ENCODE measurements at regions of chr9 and their contacts with region 1.

Region 1: GRCh38 chr9:70602321-70603019 is 188.0 kb upstream of the KLF9 start:
- DNase-seq: peak in 8 of 9 experiments; percentile 8 to 72 (median 37)
- ATAC-seq: peak; percentile 78
- H3K4me3 ChIP-seq: no peak overlapping the region
- H3K4me3 Mint-ChIP-seq: no peak overlapping the region
- H3K27ac ChIP-seq: no peak overlapping the region
- H3K27ac Mint-ChIP-seq: no peak overlapping the region
- H3K4me1 ChIP-seq: no peaks in the 10 kb centered on the region
- H3K4me1 Mint-ChIP-seq: peaks cover 3% of the 10 kb centered on the region
- H3K27me3 ChIP-seq: no peaks in the 10 kb centered on the region
- H3K27me3 Mint-ChIP-seq: no peaks in the 10 kb centered on the region
- CTCF ChIP-seq: peak; percentile 84

Region 2: GRCh38 chr9:69900406-69900805 is 702.1 kb before region 1 on chr9:
- CTCF ChIA-PET with region 1: no interaction called
- POLR2A ChIA-PET with region 1: no interaction called
- intact Hi-C with region 1: no loop called
- DNase-seq: no peak
- ATAC-seq: no peak
- H3K4me3 ChIP-seq: no peak overlapping the region
- H3K4me3 Mint-ChIP-seq: no peak overlapping the region
- H3K27ac ChIP-seq: no peak overlapping the region
- H3K27ac Mint-ChIP-seq: no peak overlapping the region
- H3K4me1 ChIP-seq: no peaks in the 10 kb centered on the region
- H3K4me1 Mint-ChIP-seq: no peaks in the 10 kb centered on the region
- H3K27me3 ChIP-seq: no peaks in the 10 kb centered on the region
- H3K27me3 Mint-ChIP-seq: peaks cover 3% of the 10 kb centered on the region
- CTCF ChIP-seq: no peak

Region 3: DNA sequence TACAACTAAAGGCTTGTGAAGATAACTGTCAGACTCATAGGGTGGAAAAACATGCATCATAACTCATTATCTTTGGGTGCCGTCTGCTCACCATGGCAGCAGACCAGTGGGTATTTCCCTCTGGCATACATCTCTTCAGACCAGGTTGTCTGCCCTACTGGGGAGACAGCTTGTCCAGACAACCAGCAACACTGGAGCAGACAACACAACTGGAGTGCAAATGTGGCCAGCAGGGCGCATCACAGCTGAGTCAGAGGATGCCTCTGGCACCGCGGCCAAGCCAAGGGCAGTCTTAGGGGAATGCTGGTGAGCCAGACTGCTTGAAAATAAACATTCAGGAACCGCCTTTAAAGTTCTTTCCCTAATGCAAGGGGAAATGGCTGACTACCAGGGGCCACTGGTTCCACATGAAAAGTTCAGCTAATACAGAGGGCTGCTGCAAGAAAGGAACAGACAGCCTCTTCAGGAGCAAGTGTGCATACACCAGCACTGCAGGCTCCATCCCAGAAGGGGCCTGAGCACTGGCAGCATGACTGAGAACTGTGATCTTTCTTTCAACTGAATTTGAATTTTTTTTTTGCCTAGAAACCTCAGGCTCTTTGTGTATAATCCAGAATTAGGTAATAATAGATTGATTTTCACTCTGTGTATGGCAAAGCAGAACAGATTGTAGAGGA is 481.5 kb before region 1 on chr9:
- CTCF ChIA-PET with region 1: no interaction called
- POLR2A ChIA-PET with region 1: no interaction called
- intact Hi-C with region 1: loop called in 1 of 2 experiments (anchors 10 kb)
- DNase-seq: no peak
- ATAC-seq: no peak
- H3K4me3 ChIP-seq: no peak overlapping the region
- H3K4me3 Mint-ChIP-seq: no peak overlapping the region
- H3K27ac ChIP-seq: no peak overlapping the region
- H3K27ac Mint-ChIP-seq: no peak overlapping the region
- H3K4me1 ChIP-seq: no peaks in the 10 kb centered on the region
- H3K4me1 Mint-ChIP-seq: no peaks in the 10 kb centered on the region
- H3K27me3 ChIP-seq: no peaks in the 10 kb centered on the region
- H3K27me3 Mint-ChIP-seq: peaks cover 9% of the 10 kb centered on the region
- CTCF ChIP-seq: no peak

Region 4: GRCh38 chr9:70263421-70263820 is 339.0 kb before region 1 on chr9:
- CTCF ChIA-PET with region 1: no interaction called
- POLR2A ChIA-PET with region 1: no interaction called
- intact Hi-C with region 1: no loop called
- DNase-seq: no peak
- ATAC-seq: no peak
- H3K4me3 ChIP-seq: no peak overlapping the region
- H3K4me3 Mint-ChIP-seq: no peak overlapping the region
- H3K27ac ChIP-seq: no peak overlapping the region
- H3K27ac Mint-ChIP-seq: no peak overlapping the region
- H3K4me1 ChIP-seq: peaks cover 42% of the 10 kb centered on the region
- H3K4me1 Mint-ChIP-seq: peaks cover 69% of the 10 kb centered on the region
- H3K27me3 ChIP-seq: no peaks in the 10 kb centered on the region
- H3K27me3 Mint-ChIP-seq: no peaks in the 10 kb centered on the region
- CTCF ChIP-seq: no peak

Region 5: DNA sequence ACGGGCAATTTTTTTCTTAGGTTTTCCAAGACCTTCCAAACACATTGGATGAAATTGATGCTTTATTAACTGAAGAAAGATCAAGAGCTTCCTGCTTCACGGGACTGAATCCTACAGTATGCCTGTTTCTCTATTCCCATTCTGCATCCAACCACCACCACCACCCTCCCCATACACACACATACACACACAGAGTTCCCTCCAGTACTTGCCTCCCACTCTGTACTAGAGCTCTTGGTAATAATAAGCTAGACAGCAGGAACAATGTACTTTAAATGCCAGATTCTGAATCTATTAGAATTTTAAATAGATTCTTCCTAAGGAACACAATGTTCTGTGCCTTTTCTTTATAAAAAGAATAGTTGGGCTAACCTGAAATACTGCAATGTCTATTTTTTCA is 255.4 kb before region 1 on chr9:
- CTCF ChIA-PET with region 1: interaction called, 49 read pairs
- POLR2A ChIA-PET with region 1: interaction called, 5 read pairs
- intact Hi-C with region 1: loop called (anchors 1 kb)
- DNase-seq: no peak
- ATAC-seq: no peak
- H3K4me3 ChIP-seq: no peak overlapping the region
- H3K4me3 Mint-ChIP-seq: no peak overlapping the region
- H3K27ac ChIP-seq: no peak overlapping the region
- H3K27ac Mint-ChIP-seq: peak overlapping the region; percentile 3
- H3K4me1 ChIP-seq: no peaks in the 10 kb centered on the region
- H3K4me1 Mint-ChIP-seq: no peaks in the 10 kb centered on the region
- H3K27me3 ChIP-seq: no peaks in the 10 kb centered on the region
- H3K27me3 Mint-ChIP-seq: no peaks in the 10 kb centered on the region
- CTCF ChIP-seq: no peak

Region 6: GRCh38 chr9:70413798-70414775 is 188.4 kb before region 1 on chr9 and contains the start of gene KLF9:
- CTCF ChIA-PET with region 1: interaction called, 13 read pairs
- POLR2A ChIA-PET with region 1: interaction called, 11 read pairs
- intact Hi-C with region 1: loop called in 1 of 2 experiments (anchors 5 kb)
- DNase-seq: peak; percentile 80 to 98 (median 90)
- ATAC-seq: peak; percentile 78
- H3K4me3 ChIP-seq: peak within 1 kb of the TSS; percentile 40 to 73
- H3K4me3 Mint-ChIP-seq: peak within 1 kb of the TSS; percentile 99
- H3K27ac ChIP-seq: peak within 1 kb of the TSS; percentile 94 to 99
- H3K27ac Mint-ChIP-seq: peak within 1 kb of the TSS; percentile 100
- H3K4me1 ChIP-seq: peaks cover 39% of the 10 kb centered on the region
- H3K4me1 Mint-ChIP-seq: peaks cover 53% of the 10 kb centered on the region
- H3K27me3 ChIP-seq: no peaks in the 10 kb centered on the region
- H3K27me3 Mint-ChIP-seq: no peaks in the 10 kb centered on the region
- CTCF ChIP-seq: no peak
- total RNA-seq, gene KLF9: 84.0 to 87.1 TPM

Region 7: DNA sequence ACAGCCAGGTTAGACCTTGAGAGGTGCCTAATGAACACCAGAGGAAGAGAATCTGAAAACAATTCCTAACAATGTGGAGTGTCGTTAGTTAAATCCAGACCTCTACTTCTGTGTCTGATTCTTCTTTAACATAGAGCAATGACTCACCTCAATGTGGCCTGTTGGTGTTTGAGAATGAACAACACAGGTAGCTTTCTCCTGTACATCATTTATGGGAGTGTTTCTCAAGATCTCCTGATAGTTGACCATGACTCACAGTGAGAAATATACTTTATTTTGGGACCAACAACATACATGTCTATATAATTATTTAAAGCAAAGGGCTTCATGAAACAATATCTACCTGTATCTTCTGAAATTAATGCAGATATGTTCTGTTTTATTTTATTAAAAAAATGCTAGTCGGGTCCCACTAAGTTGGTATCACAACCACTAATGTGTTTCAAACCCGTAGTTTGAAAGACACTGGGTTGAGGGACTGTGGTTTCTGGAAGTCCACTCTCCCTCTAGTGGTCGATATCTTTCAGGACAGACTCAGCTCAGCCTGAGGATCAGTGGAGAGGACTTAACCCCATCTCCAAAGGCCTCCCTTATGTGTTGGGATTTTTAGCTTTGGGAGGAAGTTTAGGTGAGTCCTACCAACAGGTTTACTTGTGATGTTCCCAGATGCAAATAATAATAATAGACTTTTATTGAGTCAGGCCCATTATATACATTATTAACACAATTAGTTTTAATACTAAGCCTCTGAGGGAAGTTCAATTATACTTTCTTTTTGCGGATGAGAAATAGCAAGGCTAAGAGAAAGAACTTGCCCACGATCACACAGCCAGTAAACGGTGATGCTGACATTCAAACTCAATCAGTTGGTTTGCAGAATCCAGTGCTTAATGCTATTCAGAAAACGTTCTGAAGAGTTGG is 118.0 kb before region 1 on chr9:
- CTCF ChIA-PET with region 1: interaction called, 11 read pairs
- POLR2A ChIA-PET with region 1: no interaction called
- intact Hi-C with region 1: loop called in 1 of 2 experiments (anchors 2 kb)
- DNase-seq: peak in 2 of 9 experiments; percentile 58 to 67
- ATAC-seq: peak; percentile 67
- H3K4me3 ChIP-seq: no peak overlapping the region
- H3K4me3 Mint-ChIP-seq: no peak overlapping the region
- H3K27ac ChIP-seq: no peak overlapping the region
- H3K27ac Mint-ChIP-seq: no peak overlapping the region
- H3K4me1 ChIP-seq: no peaks in the 10 kb centered on the region
- H3K4me1 Mint-ChIP-seq: peaks cover 12% of the 10 kb centered on the region
- H3K27me3 ChIP-seq: no peaks in the 10 kb centered on the region
- H3K27me3 Mint-ChIP-seq: no peaks in the 10 kb centered on the region
- CTCF ChIP-seq: peak; percentile 52

Region 8: GRCh38 chr9:70589571-70590314 is 12.7 kb before region 1 on chr9:
- CTCF ChIA-PET with region 1: interaction called, 33 read pairs
- POLR2A ChIA-PET with region 1: no interaction called
- intact Hi-C with region 1: no loop called
- DNase-seq: no peak
- ATAC-seq: no peak
- H3K4me3 ChIP-seq: no peak overlapping the region
- H3K4me3 Mint-ChIP-seq: no peak overlapping the region
- H3K27ac ChIP-seq: no peak overlapping the region
- H3K27ac Mint-ChIP-seq: no peak overlapping the region
- H3K4me1 ChIP-seq: no peaks in the 10 kb centered on the region
- H3K4me1 Mint-ChIP-seq: no peaks in the 10 kb centered on the region
- H3K27me3 ChIP-seq: no peaks in the 10 kb centered on the region
- H3K27me3 Mint-ChIP-seq: no peaks in the 10 kb centered on the region
- CTCF ChIP-seq: no peak

Measured in CD8-positive, alpha-beta T cell (primary cell).